ENCODE measurements at regions of chr20 and their contacts with region 1.

Region 1: GRCh38 chr20:2387180-2387577 is 6.5 kb downstream of the TGM6 start:
- DNase-seq: peak; percentile 44
- H3K4me3 ChIP-seq: peak overlapping the region in 1 of 2 experiments; percentile 20; a peak in 1 of 4 replicates
- H3K27ac ChIP-seq: peak overlapping the region in 1 of 2 experiments; percentile 86; a peak in 2 of 4 replicates
- H3K4me1 ChIP-seq: peaks cover 0 to 31% of the 10 kb centered on the region in 2 experiments; a peak in 2 of 4 replicates
- H3K27me3 ChIP-seq: no peaks in the 10 kb centered on the region
- CTCF ChIP-seq: peak; percentile 65
- EP300 ChIP-seq: no peak
- RAD21 ChIP-seq: peak; percentile 23; the same call in 1 of the 2 replicates

Region 2: DNA sequence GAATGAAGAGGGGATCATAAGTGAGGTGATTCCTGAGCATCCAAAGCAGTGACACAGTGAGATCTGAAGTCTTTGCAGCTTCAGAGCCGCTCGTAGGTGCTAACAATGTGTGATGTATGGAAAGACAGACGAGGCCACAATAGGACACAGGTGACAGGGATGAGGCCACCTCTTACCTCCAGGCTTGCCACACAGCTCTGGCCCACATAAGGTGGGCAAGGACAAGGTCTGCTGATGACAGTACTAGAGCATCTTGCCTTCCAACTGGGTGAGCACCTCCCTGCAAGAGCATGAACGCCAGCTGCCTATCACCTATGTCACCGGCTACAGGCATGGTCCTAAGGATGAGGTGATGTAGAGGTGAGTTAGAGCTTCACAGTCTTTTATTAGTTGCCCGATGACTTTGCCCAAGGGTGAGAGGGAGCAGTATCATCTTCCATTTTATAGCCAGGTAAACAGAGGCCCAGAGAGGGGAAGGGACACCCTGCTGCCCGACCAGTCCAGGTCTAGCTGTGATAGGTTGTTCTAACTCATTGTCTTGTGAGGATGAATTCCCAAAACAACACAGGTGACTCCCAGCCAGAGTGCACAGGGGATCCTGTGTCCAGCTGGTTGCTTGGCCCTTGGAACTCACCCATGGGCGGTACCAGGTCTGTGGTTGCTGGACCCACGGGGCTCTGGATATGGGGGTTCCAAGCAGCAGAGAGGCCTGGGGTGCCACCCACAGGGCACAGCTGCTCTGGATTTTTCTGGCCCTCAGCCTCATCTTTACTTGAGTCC is 12.6 kb before region 1 on chr20:
- CTCF ChIA-PET with region 1: no interaction called
- POLR2A ChIA-PET with region 1: no interaction called
- DNase-seq: no peak
- H3K4me3 ChIP-seq: no peak overlapping the region
- H3K27ac ChIP-seq: no peak overlapping the region
- H3K4me1 ChIP-seq: no peaks in the 10 kb centered on the region; a peak in 1 of 4 replicates
- H3K27me3 ChIP-seq: no peaks in the 10 kb centered on the region
- CTCF ChIP-seq: no peak
- EP300 ChIP-seq: no peak
- RAD21 ChIP-seq: no peak

Region 3: DNA sequence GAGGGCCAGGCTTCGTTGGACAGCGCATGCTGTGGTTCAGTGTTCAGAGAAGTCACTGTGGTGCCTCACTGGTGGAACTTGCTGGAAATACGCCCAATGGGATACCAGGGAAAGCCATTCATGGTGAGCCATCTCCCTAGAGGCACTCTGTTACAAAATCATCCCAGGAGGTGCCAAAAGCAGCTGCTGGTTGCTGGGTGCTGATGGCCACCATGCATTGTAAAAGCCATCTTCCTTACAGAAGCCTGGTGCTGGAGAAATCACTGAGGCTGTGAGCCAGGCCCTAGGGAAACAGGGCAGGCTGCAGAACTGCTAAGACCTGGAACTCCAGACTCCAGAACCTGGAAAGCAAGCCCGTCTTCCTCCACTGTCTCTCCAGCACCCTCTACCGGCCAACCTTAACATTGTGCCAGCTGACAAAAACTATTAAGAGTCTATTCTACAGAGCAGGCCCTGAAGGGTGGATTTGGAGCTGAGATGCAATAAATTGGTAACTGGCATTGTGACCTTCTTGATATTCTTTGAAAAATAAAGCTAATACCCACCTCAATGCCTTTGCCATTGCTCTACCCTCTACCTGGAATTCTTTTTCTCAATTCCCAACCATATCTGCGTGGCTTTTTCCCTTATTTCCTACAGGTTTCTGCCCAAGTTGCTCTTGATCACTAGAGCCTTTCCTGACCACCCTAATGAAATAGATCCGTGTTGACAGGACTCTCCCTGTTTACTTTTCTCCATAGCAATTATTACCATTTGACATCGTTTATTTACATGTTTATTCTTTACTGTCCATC is 65.0 kb after region 1 on chr20:
- CTCF ChIA-PET with region 1: interaction called, 11 read pairs
- POLR2A ChIA-PET with region 1: no interaction called
- DNase-seq: peak; percentile 64
- H3K4me3 ChIP-seq: no peak overlapping the region
- H3K27ac ChIP-seq: no peak overlapping the region
- H3K4me1 ChIP-seq: no peaks in the 10 kb centered on the region; a peak in 1 of 4 replicates
- H3K27me3 ChIP-seq: no peaks in the 10 kb centered on the region
- CTCF ChIP-seq: peak; percentile 82
- EP300 ChIP-seq: no peak
- RAD21 ChIP-seq: peak; percentile 79

Region 4: DNA sequence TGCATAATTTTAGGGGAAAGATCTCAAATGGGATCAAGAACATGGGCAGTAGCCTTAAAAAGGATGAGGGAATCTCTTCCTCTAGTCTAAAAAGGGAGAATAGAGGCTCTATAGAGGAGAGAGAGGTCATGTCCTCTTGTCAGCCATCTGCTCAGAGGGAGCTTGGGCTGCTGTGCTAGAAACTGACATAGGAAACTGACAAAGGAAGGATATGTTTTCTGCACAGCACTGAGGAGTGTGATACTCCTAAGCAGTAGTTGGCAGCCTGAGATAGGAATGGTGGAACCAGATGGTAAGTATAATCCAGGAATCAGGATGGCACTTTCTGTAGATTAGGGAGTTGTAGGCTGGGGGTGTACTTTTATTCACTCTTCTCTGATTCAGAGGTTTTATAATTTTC is 545.3 kb after region 1 on chr20:
- CTCF ChIA-PET with region 1: no interaction called
- POLR2A ChIA-PET with region 1: no interaction called
- DNase-seq: no peak
- H3K4me3 ChIP-seq: no peak overlapping the region
- H3K27ac ChIP-seq: no peak overlapping the region
- H3K4me1 ChIP-seq: no peaks in the 10 kb centered on the region
- H3K27me3 ChIP-seq: no peaks in the 10 kb centered on the region
- CTCF ChIP-seq: no peak
- EP300 ChIP-seq: no peak
- RAD21 ChIP-seq: no peak